ENCODE measurements at regions of chr7 and their contacts with region 1.

Region 1: DNA sequence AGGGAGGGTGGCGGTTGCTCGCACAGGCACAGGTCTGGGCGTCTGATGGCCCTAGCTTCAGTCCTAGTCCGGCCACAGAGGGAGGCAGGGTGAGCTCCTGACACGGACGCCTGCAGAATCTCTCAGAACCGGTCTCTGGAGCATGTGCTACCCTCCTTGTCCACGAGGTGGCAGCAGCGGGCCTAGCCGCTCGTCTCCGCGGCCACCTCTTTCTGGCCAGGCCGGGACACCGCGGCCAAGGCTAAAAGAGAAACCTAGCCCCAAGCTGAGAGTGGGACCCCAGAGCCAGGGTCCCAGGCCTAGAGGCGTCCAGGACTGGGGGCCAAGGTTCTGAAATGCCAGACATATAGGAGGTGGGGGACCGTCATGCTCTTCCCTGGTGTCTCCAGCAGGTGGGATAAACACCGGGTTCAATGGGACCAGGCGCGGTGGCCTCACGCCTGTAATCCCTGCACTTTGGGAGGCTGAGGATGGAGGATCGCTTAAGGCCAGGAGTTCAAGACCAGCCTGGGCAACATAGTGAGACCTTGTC is 3.2 kb upstream of the LAT2 start:
- DNase-seq: no peak
- H3K4me3 ChIP-seq: peak overlapping the region; percentile 38
- CTCF ChIP-seq: peak; percentile 86

Region 2: GRCh38 chr7:73520673-73521635 is 685.7 kb before region 1 on chr7:
- CTCF ChIA-PET with region 1: no interaction called
- POLR2A ChIA-PET with region 1: no interaction called
- DNase-seq: no peak
- H3K4me3 ChIP-seq: peak overlapping the region; percentile 76
- CTCF ChIP-seq: no peak

Region 3: GRCh38 chr7:73876973-73877372 is 329.7 kb before region 1 on chr7:
- CTCF ChIA-PET with region 1: no interaction called
- POLR2A ChIA-PET with region 1: no interaction called
- DNase-seq: no peak
- H3K4me3 ChIP-seq: no peak overlapping the region
- CTCF ChIP-seq: no peak

Region 4: GRCh38 chr7:74068393-74069085 is 138.1 kb before region 1 on chr7:
- CTCF ChIA-PET with region 1: interaction called, 127 read pairs
- POLR2A ChIA-PET with region 1: no interaction called
- DNase-seq: no peak
- H3K4me3 ChIP-seq: no peak overlapping the region
- CTCF ChIP-seq: no peak

Region 5: DNA sequence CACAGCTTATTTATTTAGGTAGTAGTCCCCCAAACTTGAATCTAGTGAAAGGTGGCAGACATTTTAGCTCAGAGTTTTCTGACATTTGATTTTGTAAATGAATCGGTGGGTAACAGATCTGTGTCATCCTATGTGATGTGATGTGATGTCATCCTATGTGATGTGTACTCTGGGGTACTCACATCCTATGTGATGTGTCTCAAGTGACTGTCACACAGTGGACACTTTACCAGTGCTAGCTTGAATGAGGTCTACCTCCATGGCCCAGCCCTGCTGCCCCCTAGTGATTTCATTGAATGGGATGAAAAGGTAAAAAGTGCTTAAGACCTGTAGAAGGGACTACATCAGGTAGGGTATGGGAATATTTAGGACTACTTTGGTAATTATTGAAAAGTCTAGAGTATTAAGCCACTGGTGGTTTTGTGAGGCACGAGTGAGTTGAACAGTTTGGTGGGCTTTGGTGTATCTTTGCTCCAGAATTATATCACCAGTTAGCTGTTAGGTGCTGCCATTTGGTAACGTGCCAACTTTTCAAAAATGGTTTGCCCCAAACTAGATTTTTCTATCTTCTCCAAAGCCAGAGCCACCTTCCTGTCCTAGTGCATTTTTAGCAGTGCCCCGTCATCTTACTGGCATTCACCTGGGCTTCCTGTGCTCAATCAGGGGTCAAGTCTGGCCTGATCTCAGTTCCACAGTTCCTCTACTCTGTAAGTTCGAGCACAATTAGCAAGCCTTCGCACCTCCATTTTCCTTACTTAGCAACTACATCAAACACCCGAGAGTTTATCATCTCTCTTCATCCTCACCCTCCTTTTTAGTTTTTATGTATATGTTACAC is 22.8 kb before region 1 on chr7:
- CTCF ChIA-PET with region 1: interaction called, 21 read pairs
- POLR2A ChIA-PET with region 1: interaction called, 3 read pairs
- DNase-seq: no peak
- H3K4me3 ChIP-seq: no peak overlapping the region
- CTCF ChIP-seq: no peak

Region 6: GRCh38 chr7:74217455-74218342 is 11.0 kb after region 1 on chr7:
- CTCF ChIA-PET with region 1: interaction called, 16 read pairs
- POLR2A ChIA-PET with region 1: no interaction called
- DNase-seq: no peak
- H3K4me3 ChIP-seq: no peak overlapping the region
- CTCF ChIP-seq: no peak

Region 7: GRCh38 chr7:74379938-74380337 is 173.3 kb after region 1 on chr7:
- CTCF ChIA-PET with region 1: interaction called, 809 read pairs
- POLR2A ChIA-PET with region 1: no interaction called
- DNase-seq: no peak
- H3K4me3 ChIP-seq: no peak overlapping the region
- CTCF ChIP-seq: no peak

Measured in AG04449 (cell line).